ENCODE measurements at regions of chr11 and their contacts with region 1.

Region 1: GRCh38 chr11:27904358-27905055 is 203.4 kb downstream of the KIF18A start:
- DNase-seq: no peak
- H3K4me3 ChIP-seq: no peak overlapping the region
- H3K27ac ChIP-seq: no peak overlapping the region
- H3K4me1 ChIP-seq: no peaks in the 10 kb centered on the region
- H3K27me3 ChIP-seq: no peaks in the 10 kb centered on the region
- CTCF ChIP-seq: no peak
- POLR2A ChIP-seq: no peak

Region 2: GRCh38 chr11:25943777-25944661 is 1960.5 kb before region 1 on chr11:
- intact Hi-C with region 1: loop called (anchors 10 kb)
- DNase-seq: no peak
- H3K4me3 ChIP-seq: no peak overlapping the region
- H3K27ac ChIP-seq: no peak overlapping the region
- H3K4me1 ChIP-seq: no peaks in the 10 kb centered on the region
- H3K27me3 ChIP-seq: no peaks in the 10 kb centered on the region
- CTCF ChIP-seq: no peak
- POLR2A ChIP-seq: no peak

Region 3: DNA sequence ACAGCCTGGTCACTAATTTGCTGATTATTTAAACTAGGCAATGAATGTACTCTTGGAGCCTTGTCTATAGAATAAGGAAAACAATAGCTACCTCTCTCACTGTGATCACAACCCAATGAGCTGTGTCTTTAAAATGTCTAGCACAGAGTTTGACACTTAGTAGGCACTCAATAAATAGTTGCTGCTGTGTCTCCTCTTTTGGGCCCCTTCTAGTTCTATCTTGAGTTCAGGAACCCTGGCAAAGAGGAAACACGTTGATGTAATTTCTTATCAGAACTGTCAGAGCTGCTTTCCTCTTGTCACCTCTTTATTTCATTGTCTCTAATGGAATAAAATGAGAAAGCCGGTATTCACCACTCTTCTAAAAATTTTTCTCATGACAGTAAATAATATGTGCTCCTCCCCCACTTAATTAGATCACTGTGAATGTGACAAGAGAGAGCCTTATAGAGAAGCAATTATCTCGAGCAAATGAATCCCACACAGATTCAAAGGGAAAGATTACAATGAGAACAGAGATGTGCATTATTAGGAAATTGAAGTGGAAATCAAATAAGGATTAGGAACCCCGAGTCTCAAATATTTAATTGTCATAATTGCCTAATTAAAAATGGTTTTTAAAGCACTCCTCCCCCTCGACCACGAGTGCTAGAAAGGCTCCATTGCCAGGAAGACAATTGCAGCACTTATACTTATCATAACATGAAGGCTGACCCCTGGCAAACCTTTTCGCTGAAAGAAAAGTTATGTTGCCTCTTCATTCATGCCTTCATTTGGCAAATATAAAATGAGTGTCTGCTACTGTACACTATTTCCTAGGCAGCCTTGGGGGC is 29.3 kb before region 1 on chr11:
- intact Hi-C with region 1: no loop called
- DNase-seq: no peak
- H3K4me3 ChIP-seq: no peak overlapping the region
- H3K27ac ChIP-seq: no peak overlapping the region
- H3K4me1 ChIP-seq: no peaks in the 10 kb centered on the region
- H3K27me3 ChIP-seq: no peaks in the 10 kb centered on the region
- CTCF ChIP-seq: no peak
- POLR2A ChIP-seq: no peak

Region 4: GRCh38 chr11:27977031-27977430 is 72.5 kb after region 1 on chr11:
- intact Hi-C with region 1: loop called (anchors 2 kb)
- DNase-seq: no peak
- H3K4me3 ChIP-seq: no peak overlapping the region
- H3K27ac ChIP-seq: no peak overlapping the region
- H3K4me1 ChIP-seq: no peaks in the 10 kb centered on the region
- H3K27me3 ChIP-seq: no peaks in the 10 kb centered on the region
- CTCF ChIP-seq: no peak
- POLR2A ChIP-seq: no peak